BJ (cell line): ENCODE measurements at regions of chr5 and their contacts with region 1.

Region 1: DNA sequence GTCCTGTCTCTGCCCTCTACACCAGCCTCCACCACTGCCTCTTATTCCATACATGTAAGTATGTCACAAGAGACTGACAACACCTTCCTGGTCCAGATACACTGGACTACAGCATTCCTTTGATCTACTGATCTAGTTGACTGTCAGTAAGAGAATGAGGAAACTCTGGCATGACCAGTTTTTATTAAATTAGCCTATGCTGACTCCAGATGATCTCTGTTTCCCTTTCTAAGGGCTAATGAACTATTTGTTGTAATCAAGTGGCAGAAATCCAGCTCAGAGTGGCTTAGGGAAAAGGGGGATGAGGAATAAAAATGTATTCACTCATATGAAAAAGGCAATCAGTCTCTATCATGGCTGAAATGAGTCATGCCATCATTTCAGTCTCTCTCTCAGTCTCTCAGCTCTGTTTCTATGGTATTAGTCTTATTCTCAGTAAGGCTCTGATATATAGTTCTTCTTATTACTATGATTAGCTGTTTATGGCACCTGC is 5.5 kb downstream of the ARHGEF37 start:
- DNase-seq: no peak
- H3K4me3 ChIP-seq: no peak overlapping the region
- H3K27me3 ChIP-seq: no peaks in the 10 kb centered on the region
- CTCF ChIP-seq: no peak

Region 2: DNA sequence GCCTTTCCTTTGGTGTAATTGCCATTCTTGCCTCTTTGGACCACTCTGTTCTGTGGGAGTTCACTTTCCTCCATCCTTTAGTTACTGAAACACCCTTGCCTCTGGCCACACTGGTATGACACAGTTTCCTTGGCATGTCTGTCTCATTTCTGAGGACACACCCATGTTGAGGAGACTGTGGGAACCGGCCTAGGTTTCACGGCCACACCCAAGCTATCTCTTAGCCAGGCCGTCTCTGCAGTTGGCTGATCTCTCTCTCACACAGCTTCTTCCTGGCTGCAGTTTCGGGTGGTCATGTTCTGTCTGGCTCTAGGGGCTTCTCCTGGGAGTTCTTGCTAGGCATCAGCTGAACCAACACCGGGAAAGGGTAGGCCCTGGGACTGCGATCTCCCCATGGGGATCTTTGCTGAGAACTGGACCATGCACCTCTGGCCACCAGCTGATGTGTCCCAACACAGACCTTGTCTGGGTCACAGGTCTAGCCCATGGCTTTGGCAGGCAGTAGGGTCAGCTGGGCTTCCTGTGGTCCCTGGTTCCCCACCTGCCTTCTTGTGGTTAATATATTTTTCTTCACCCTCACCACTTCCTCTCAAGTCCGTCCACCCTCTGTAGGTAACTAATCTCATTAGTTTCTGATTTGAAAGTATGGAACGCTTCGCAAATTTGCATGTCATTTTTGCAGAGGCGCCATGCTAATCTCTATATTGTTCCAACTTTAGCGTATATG is 19.3 kb after region 1 on chr5:
- CTCF ChIA-PET with region 1: interaction called, 5 read pairs
- POLR2A ChIA-PET with region 1: interaction called, 14 read pairs
- DNase-seq: peak; percentile 91
- H3K4me3 ChIP-seq: no peak overlapping the region
- H3K27me3 ChIP-seq: no peaks in the 10 kb centered on the region
- CTCF ChIP-seq: no peak

Region 3: GRCh38 chr5:149680810-149681221 is 94.0 kb after region 1 on chr5:
- CTCF ChIA-PET with region 1: no interaction called
- POLR2A ChIA-PET with region 1: no interaction called
- DNase-seq: no peak
- H3K4me3 ChIP-seq: no peak overlapping the region
- H3K27me3 ChIP-seq: peaks cover 20% of the 10 kb centered on the region
- CTCF ChIP-seq: no peak